GM12878 (cell line): ENCODE measurements at regions of chr1 and their contacts with region 1.

Region 1: GRCh38 chr1:163807061-163808049 is 485.6 kb downstream of the NUF2 start:
- DNase-seq: no peak
- ATAC-seq: no peak
- H3K4me3 ChIP-seq: no peak overlapping the region
- H3K27ac ChIP-seq: no peak overlapping the region
- H3K4me1 ChIP-seq: no peaks in the 10 kb centered on the region
- H3K27me3 ChIP-seq: no peaks in the 10 kb centered on the region
- CTCF ChIP-seq: no peak
- EP300 ChIP-seq: no peak
- POLR2A ChIP-seq: no peak
- RAD21 ChIP-seq: no peak

Region 2: DNA sequence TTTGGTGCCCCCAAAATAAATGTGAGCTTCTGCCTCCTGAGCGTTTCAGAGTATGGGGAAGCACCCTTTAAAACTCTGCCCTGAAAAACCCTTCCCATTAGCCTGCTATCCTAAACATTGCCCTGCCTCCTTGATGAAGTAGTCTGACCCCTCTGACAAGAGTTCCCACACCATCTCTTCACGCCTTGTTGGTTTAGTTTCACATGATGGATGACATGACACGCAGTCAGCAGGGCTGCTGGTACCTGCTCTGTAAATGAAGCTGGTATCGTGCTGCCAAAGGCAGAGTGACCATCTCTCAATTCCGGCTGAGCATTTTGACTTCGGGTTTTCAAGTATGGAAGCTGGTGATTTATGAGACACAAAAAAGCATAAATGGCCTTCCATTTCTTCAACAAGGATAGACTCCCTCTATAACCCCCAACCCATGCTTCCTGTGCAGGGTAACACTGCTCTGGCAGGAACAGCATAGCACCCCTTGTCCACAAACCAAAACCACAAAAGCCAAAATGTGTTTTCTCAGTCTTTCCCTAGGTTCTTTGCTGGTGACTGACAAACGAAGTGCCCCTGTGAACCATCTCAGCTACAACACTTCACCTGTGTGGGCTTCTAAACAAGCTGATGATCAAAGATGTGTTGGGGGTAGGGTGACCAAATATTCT is 41.0 kb before region 1 on chr1:
- CTCF ChIA-PET with region 1: no interaction called
- POLR2A ChIA-PET with region 1: no interaction called
- RAD21 ChIA-PET with region 1: no interaction called
- SMC1A ChIA-PET with region 1: no interaction called
- in situ Hi-C with region 1: loop called (anchors 5 kb)
- intact Hi-C with region 1: no loop called
- DNase-seq: no peak
- ATAC-seq: no peak
- H3K4me3 ChIP-seq: no peak overlapping the region
- H3K27ac ChIP-seq: no peak overlapping the region
- H3K4me1 ChIP-seq: no peaks in the 10 kb centered on the region
- H3K27me3 ChIP-seq: no peaks in the 10 kb centered on the region
- CTCF ChIP-seq: no peak
- EP300 ChIP-seq: no peak
- POLR2A ChIP-seq: no peak
- RAD21 ChIP-seq: no peak

Region 3: GRCh38 chr1:163933437-163933836 is 126.1 kb after region 1 on chr1:
- CTCF ChIA-PET with region 1: no interaction called
- POLR2A ChIA-PET with region 1: no interaction called
- RAD21 ChIA-PET with region 1: no interaction called
- SMC1A ChIA-PET with region 1: no interaction called
- in situ Hi-C with region 1: no loop called
- intact Hi-C with region 1: no loop called
- DNase-seq: no peak
- ATAC-seq: no peak
- H3K4me3 ChIP-seq: no peak overlapping the region
- H3K27ac ChIP-seq: no peak overlapping the region
- H3K4me1 ChIP-seq: no peaks in the 10 kb centered on the region
- H3K27me3 ChIP-seq: no peaks in the 10 kb centered on the region
- CTCF ChIP-seq: no peak
- EP300 ChIP-seq: no peak
- POLR2A ChIP-seq: no peak
- RAD21 ChIP-seq: no peak